ENCODE measurements at regions of chr15 and their contacts with region 1.

Region 1: GRCh38 chr15:31435261-31435911 is 108.8 kb downstream of the KLF13 start:
- DNase-seq: peak; percentile 94
- H3K4me3 ChIP-seq: peak overlapping the region; percentile 19 to 28 (median 24)
- H3K27ac ChIP-seq: peak overlapping the region; percentile 58 to 71 (median 68)
- H3K4me1 ChIP-seq: peaks cover 25 to 28% (median 27%) of the 10 kb centered on the region in 4 donors
- H3K27me3 ChIP-seq: no peaks in the 10 kb centered on the region
- CTCF ChIP-seq: peak; percentile 62 to 78 (median 73)
- EP300 ChIP-seq: no peak
- POLR2A ChIP-seq: no peak

Region 2: GRCh38 chr15:30913771-30914170 is 521.6 kb before region 1 on chr15:
- intact Hi-C with region 1: no loop called
- DNase-seq: no peak
- H3K4me3 ChIP-seq: no peak overlapping the region
- H3K27ac ChIP-seq: no peak overlapping the region
- H3K4me1 ChIP-seq: peaks cover 0 to 7% (median 0%) of the 10 kb centered on the region in 4 donors
- H3K27me3 ChIP-seq: no peaks in the 10 kb centered on the region
- CTCF ChIP-seq: no peak
- EP300 ChIP-seq: no peak
- POLR2A ChIP-seq: no peak

Region 3: DNA sequence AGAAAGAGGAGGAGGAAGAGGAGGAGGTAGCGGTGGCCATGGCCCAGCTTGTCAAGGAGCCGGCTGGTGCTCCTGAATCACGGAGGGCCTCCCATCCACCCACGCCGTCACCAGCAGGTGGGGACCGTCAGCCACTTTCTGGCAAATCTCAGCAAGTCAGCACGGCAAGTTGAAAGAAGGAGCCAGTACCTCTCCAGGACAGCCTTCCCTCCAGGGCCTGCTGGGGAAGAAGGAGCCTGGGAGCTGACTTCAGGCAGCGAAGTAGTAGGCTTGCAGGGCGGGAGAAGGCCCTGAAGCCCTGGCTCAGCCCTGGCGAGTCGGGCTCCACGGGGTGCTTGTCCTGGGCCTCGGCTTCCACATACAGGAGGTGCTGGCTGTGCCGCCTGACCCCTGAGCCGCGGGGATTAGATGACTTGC is 234.6 kb before region 1 on chr15:
- intact Hi-C with region 1: loop called (anchors 5 kb)
- DNase-seq: no peak
- H3K4me3 ChIP-seq: no peak overlapping the region
- H3K27ac ChIP-seq: no peak overlapping the region
- H3K4me1 ChIP-seq: peaks cover 0 to 21% (median 14%) of the 10 kb centered on the region in 4 donors
- H3K27me3 ChIP-seq: no peaks in the 10 kb centered on the region
- CTCF ChIP-seq: peak; percentile 48 to 61 (median 56)
- EP300 ChIP-seq: no peak
- POLR2A ChIP-seq: no peak

Region 4: DNA sequence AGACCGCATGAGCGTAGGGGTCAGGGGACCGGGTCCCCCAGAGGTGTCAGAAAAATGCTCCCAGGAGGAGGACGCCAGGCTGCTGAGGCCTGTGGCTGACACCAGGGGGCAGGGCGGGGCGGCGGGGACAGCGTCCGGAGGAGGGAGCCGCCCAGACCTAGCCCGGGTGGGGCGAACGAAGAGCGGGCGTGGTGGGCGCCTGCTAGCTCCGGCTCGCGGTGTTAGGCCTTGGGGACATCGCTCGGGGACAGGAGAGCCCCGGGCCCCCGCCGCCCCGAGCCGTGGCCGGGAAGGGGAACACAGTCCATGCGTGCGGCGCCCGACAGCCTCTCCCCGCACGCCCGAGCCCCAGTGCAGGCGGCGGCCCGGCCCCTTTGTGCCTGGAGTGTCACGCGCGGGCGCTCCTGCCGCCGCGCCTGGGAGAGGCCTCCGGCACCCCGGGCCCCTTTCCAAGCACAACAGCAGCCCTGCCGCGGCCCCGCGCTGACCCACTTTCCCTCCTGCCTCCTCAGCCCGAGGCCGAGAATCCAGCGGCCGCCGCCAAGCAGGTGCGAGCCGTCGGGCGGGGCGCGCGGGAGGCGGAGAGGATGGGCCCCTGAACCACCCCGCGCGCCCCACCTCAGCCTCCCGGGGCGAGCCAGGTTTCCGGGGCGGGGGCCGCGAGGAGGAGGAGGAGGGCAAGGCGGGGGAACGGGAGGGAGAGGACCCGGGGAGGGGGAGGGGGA is 219.7 kb before region 1 on chr15:
- intact Hi-C with region 1: loop called (anchors 5 kb)
- DNase-seq: no peak
- H3K4me3 ChIP-seq: peak overlapping the region; percentile 62 to 76 (median 68)
- H3K27ac ChIP-seq: peak overlapping the region; percentile 86 to 97 (median 93)
- H3K4me1 ChIP-seq: peaks cover 29 to 49% (median 47%) of the 10 kb centered on the region in 4 donors
- H3K27me3 ChIP-seq: no peaks in the 10 kb centered on the region
- CTCF ChIP-seq: peak; percentile 88 to 93 (median 91)
- EP300 ChIP-seq: no peak
- POLR2A ChIP-seq: peak; percentile 16

Region 5: GRCh38 chr15:31365655-31366127 is 69.7 kb before region 1 on chr15:
- intact Hi-C with region 1: loop called (anchors 5 kb)
- DNase-seq: peak; percentile 99
- H3K4me3 ChIP-seq: peak overlapping the region; percentile 48 to 56 (median 53)
- H3K27ac ChIP-seq: peak overlapping the region; percentile 92 to 93 (median 92)
- H3K4me1 ChIP-seq: peaks cover 83 to 94% (median 92%) of the 10 kb centered on the region in 4 donors
- H3K27me3 ChIP-seq: no peaks in the 10 kb centered on the region
- CTCF ChIP-seq: peak in 2 of 3 experiments; percentile 44 to 56
- EP300 ChIP-seq: peak; percentile 100
- POLR2A ChIP-seq: no peak

Region 6: DNA sequence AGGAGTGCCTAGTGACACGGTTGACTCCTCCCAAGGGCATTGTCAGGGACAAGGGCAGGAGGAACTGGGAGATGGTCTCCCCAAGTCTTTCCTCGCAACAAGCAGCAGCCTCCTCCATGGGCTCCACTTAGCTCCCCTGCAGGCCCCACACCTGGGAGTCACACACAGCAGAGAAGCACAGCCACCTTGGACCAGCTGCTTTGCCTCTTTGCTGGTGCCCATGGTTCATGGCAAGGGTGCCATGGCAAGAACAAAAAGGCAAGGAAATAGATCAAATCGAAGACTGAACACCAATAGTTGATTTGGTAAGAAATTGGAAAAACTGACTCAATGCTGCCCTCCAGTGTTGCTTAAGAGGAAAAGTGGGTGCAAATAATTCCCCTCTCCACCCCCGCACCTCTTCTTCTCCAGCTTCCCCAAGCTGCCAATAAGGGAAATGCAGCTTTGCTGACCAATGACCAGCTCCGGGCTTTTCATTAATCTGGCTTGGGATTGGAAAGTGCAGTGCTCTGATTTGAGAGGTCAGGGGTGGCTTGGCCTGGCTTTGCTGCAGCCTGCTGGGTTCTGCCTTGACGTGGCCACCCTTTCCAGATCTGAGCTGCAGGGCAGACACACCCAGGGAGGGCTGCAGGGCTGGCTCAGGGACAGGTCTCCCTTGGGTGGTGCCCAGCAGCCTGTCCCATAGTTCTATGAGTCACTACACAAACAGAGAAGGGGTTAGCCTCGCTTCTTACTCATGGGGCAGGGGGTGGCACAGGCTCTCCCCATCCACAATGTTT is 53.2 kb after region 1 on chr15:
- intact Hi-C with region 1: loop called (anchors 5 kb)
- DNase-seq: peak; percentile 91
- H3K4me3 ChIP-seq: no peak overlapping the region
- H3K27ac ChIP-seq: peak overlapping the region; percentile 33 to 60 (median 40)
- H3K4me1 ChIP-seq: peaks cover 22 to 28% (median 24%) of the 10 kb centered on the region in 4 donors
- H3K27me3 ChIP-seq: peaks cover 0 to 13% (median 2%) of the 10 kb centered on the region in 4 donors
- CTCF ChIP-seq: peak; percentile 87 to 92 (median 89)
- EP300 ChIP-seq: no peak
- POLR2A ChIP-seq: no peak